Naive thymus-derived CD4-positive, alpha-beta T cell (primary cell): ENCODE measurements at regions of chr3 and their contacts with region 1.

Region 1: DNA sequence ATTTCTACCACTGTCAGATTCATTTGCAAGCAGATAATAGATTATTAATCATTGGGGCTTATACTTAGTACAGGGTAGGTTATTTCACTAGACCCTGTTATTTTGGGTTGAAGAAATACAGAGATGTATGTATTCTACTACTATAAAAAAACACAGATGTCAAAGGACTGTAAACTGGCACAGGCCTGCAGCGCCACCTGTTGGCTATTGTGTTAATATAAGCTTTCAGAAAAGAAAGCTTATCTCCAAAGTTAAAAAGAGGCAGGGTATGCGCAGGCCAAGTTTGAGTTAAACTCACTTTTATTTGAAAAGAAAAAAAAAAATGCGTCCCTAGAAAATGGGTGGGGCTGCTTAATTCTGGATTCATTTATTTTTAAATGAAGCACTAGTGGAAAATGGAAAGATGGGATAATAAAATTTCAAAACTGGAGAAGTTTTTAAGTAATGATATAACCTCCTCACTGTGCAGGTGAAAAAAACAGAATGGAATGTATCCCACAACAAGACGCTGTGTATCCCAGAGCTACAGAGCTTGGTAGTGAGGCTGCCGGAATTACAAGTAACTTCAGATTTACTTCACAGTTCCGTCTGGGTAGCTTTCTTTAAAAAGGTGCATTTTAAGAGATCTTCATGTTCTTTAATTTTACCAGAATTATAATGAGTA is 407.2 kb upstream of the TGFBR2 start:
- DNase-seq: peak; percentile 25 to 66 (median 58)
- ATAC-seq: peak; percentile 61
- H3K4me3 ChIP-seq: no peak overlapping the region
- H3K4me3 Mint-ChIP-seq: no peak overlapping the region
- H3K27ac ChIP-seq: no peak overlapping the region
- H3K27ac Mint-ChIP-seq: no peak overlapping the region
- H3K4me1 ChIP-seq: no peaks in the 10 kb centered on the region
- H3K4me1 Mint-ChIP-seq: peaks cover 0 to 7% (median 4%) of the 10 kb centered on the region in 7 donors
- H3K27me3 ChIP-seq: no peaks in the 10 kb centered on the region
- H3K27me3 Mint-ChIP-seq: peaks cover 0 to 6% (median 0%) of the 10 kb centered on the region in 5 donors

Region 2: GRCh38 chr3:28916713-28917499 is 1282.3 kb before region 1 on chr3:
- CTCF ChIA-PET with region 1: no interaction called
- POLR2A ChIA-PET with region 1: no interaction called
- intact Hi-C with region 1: loop called in 1 of 2 experiments (anchors 5 kb)
- DNase-seq: peak in 4 of 9 donors; percentile 0 to 23 (median 7)
- ATAC-seq: no peak
- H3K4me3 ChIP-seq: no peak overlapping the region
- H3K4me3 Mint-ChIP-seq: peak overlapping the region in 2 of 10 donors; percentile 26 to 43
- H3K27ac ChIP-seq: no peak overlapping the region
- H3K27ac Mint-ChIP-seq: no peak overlapping the region
- H3K4me1 ChIP-seq: no peaks in the 10 kb centered on the region
- H3K4me1 Mint-ChIP-seq: peaks cover 0 to 18% (median 4%) of the 10 kb centered on the region in 7 donors
- H3K27me3 ChIP-seq: no peaks in the 10 kb centered on the region
- H3K27me3 Mint-ChIP-seq: peaks cover 0 to 14% (median 0%) of the 10 kb centered on the region in 5 donors

Region 3: DNA sequence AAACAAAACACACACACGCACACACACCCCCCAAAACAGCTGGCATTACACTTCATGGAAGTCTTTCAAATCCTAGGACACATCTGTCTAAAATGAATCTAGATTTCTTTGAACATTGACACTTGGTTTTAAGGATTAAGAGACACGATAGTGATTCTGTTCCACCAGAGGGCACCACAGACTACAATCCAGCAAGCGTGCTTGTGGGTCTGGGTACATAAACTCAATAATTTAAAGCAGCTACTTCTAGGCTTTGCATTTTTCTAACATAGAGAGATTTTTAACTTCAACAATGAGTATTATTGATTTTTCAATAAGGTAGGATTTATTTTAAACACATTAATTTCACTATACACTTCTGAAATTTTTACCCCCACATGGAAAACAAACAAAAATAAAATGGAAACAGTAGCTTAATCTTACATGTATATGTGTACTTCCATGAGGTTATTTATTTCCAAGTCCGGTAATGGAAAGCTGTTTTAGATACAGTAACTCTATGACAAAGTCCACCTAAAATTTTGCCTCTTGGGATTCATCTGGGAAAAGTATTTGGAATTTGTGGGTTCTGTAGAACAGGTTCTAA is 156.9 kb before region 1 on chr3:
- CTCF ChIA-PET with region 1: interaction called, 20 read pairs
- POLR2A ChIA-PET with region 1: no interaction called
- intact Hi-C with region 1: loop called (anchors 1 kb)
- DNase-seq: peak in 8 of 9 donors; percentile 25 to 73 (median 63)
- ATAC-seq: peak; percentile 68
- H3K4me3 ChIP-seq: no peak overlapping the region
- H3K4me3 Mint-ChIP-seq: no peak overlapping the region
- H3K27ac ChIP-seq: no peak overlapping the region
- H3K27ac Mint-ChIP-seq: no peak overlapping the region
- H3K4me1 ChIP-seq: no peaks in the 10 kb centered on the region
- H3K4me1 Mint-ChIP-seq: peaks cover 0 to 7% (median 4%) of the 10 kb centered on the region in 7 donors
- H3K27me3 ChIP-seq: no peaks in the 10 kb centered on the region
- H3K27me3 Mint-ChIP-seq: peaks cover 17 to 34% (median 28%) of the 10 kb centered on the region in 5 donors

Region 4: GRCh38 chr3:30511524-30512278 is 312.5 kb after region 1 on chr3:
- CTCF ChIA-PET with region 1: no interaction called
- POLR2A ChIA-PET with region 1: no interaction called
- intact Hi-C with region 1: loop called in 1 of 2 experiments (anchors 10 kb)
- DNase-seq: peak in 1 of 9 donors; percentile 4
- ATAC-seq: no peak
- H3K4me3 ChIP-seq: no peak overlapping the region
- H3K4me3 Mint-ChIP-seq: peak overlapping the region in 6 of 10 donors; percentile 7 to 55 (median 30)
- H3K27ac ChIP-seq: no peak overlapping the region
- H3K27ac Mint-ChIP-seq: peak overlapping the region in 2 of 9 donors; percentile 38 to 76
- H3K4me1 ChIP-seq: peaks cover 0 to 10% of the 10 kb centered on the region in 2 donors
- H3K4me1 Mint-ChIP-seq: peaks cover 8 to 17% (median 12%) of the 10 kb centered on the region in 7 donors
- H3K27me3 ChIP-seq: no peaks in the 10 kb centered on the region
- H3K27me3 Mint-ChIP-seq: no peaks in the 10 kb centered on the region

Region 5: GRCh38 chr3:30751610-30752299 is 552.5 kb after region 1 on chr3:
- CTCF ChIA-PET with region 1: interaction called, 12 read pairs
- POLR2A ChIA-PET with region 1: no interaction called
- intact Hi-C with region 1: loop called in 1 of 2 experiments (anchors 2 kb)
- DNase-seq: peak; percentile 8 to 71 (median 54)
- ATAC-seq: peak; percentile 65
- H3K4me3 ChIP-seq: no peak overlapping the region
- H3K4me3 Mint-ChIP-seq: peak overlapping the region in 3 of 10 donors; percentile 16 to 48 (median 45)
- H3K27ac ChIP-seq: no peak overlapping the region
- H3K27ac Mint-ChIP-seq: peak overlapping the region in 1 of 9 donors; percentile 28
- H3K4me1 ChIP-seq: peaks cover 0 to 3% of the 10 kb centered on the region in 2 donors
- H3K4me1 Mint-ChIP-seq: peaks cover 0 to 33% (median 12%) of the 10 kb centered on the region in 7 donors
- H3K27me3 ChIP-seq: no peaks in the 10 kb centered on the region
- H3K27me3 Mint-ChIP-seq: peaks cover 0 to 9% (median 0%) of the 10 kb centered on the region in 5 donors